ENCODE measurements at regions of chr17 and their contacts with region 1.

Region 1: GRCh38 chr17:76353599-76354316 is at the start of gene PRPSAP1:
- DNase-seq: peak; percentile 96
- ATAC-seq: peak; percentile 93
- H3K4me3 ChIP-seq: peak within 1 kb of the TSS; percentile 53 to 88 (median 68)
- H3K4me3 Mint-ChIP-seq: peak within 1 kb of the TSS; percentile 99
- H3K27ac ChIP-seq: peak within 1 kb of the TSS; percentile 84 to 94
- H3K27ac Mint-ChIP-seq: peak within 1 kb of the TSS; percentile 99
- H3K4me1 ChIP-seq: peaks cover 7 to 16% of the 10 kb centered on the region in 2 donors
- H3K4me1 Mint-ChIP-seq: peaks cover 27% of the 10 kb centered on the region
- H3K27me3 ChIP-seq: no peaks in the 10 kb centered on the region
- H3K27me3 Mint-ChIP-seq: no peaks in the 10 kb centered on the region
- CTCF ChIP-seq: peak; percentile 19
- total RNA-seq, gene PRPSAP1: 45.5 and 48.0 TPM in 2 replicates

Region 2: GRCh38 chr17:76072148-76072858 is 281.5 kb before region 1 on chr17 and contains the start of gene SRP68:
- CTCF ChIA-PET with region 1: no interaction called
- POLR2A ChIA-PET with region 1: no interaction called
- intact Hi-C with region 1: loop called (anchors 2 kb)
- DNase-seq: peak; percentile 87
- ATAC-seq: peak; percentile 93
- H3K4me3 ChIP-seq: peak within 1 kb of the TSS; percentile 80 to 92 (median 89)
- H3K4me3 Mint-ChIP-seq: peak within 1 kb of the TSS; percentile 96
- H3K27ac ChIP-seq: peak within 1 kb of the TSS; percentile 74 to 87
- H3K27ac Mint-ChIP-seq: peak within 1 kb of the TSS; percentile 94
- H3K4me1 ChIP-seq: peaks cover 46 to 53% of the 10 kb centered on the region in 2 donors
- H3K4me1 Mint-ChIP-seq: peaks cover 59% of the 10 kb centered on the region
- H3K27me3 ChIP-seq: peaks cover 0 to 39% (median 26%) of the 10 kb centered on the region in 4 experiments
- H3K27me3 Mint-ChIP-seq: peaks cover 21% of the 10 kb centered on the region
- CTCF ChIP-seq: no peak
- total RNA-seq, gene SRP68: 75.4 and 82.3 TPM in 2 replicates

Region 3: DNA sequence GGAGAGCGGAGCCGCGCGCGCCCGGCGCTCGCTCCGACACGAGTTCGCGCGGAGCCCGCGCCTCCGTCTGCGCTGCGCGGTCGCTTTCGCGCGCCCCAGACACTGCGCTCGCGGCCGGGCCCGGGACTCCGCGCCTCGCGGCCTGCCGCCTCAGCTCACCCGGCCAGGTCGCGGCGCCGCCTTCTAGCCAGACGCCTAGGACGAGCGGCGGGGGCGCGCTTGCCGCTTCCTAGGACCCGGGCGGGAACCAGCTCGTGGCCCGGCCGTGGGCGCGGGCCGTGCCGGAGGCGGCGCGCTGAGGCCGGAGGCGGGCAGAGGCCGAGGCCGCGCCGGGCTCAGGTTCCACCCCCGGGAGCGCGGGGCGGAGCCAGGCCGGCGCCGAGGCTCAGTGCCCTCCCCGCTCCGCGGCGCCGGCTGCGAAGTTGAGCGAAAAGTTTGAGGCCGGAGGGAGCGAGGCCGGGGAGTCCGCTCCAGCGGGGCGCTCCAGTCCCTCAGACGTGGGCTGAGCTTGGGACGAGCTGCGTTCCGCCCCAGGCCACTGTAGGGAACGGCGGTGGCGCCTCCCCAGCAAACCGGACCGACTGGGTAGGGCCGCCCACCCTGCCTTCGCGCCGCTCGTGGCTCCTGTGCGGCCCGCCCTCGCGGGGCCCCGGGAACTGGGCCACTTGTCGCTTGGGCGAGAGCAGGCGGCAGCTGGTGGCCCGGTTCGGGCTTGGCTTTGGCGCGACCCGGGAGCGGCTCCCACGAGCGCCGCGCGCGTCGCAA is 30.6 kb after region 1 on chr17 and contains the start of gene SPHK1:
- CTCF ChIA-PET with region 1: interaction called, 32 read pairs
- POLR2A ChIA-PET with region 1: interaction called, 4 read pairs
- intact Hi-C with region 1: loop called (anchors 1 kb)
- DNase-seq: peak; percentile 81
- ATAC-seq: peak; percentile 76
- H3K4me3 ChIP-seq: peak within 1 kb of the TSS; percentile 40 to 71 (median 58)
- H3K4me3 Mint-ChIP-seq: peak within 1 kb of the TSS; percentile 84
- H3K27ac ChIP-seq: no peak within 1 kb of the TSS
- H3K27ac Mint-ChIP-seq: peak within 1 kb of the TSS; percentile 78
- H3K4me1 ChIP-seq: peaks cover 26 to 29% of the 10 kb centered on the region in 2 donors
- H3K4me1 Mint-ChIP-seq: peaks cover 17% of the 10 kb centered on the region
- H3K27me3 ChIP-seq: peaks cover 0 to 24% (median 8%) of the 10 kb centered on the region in 4 experiments
- H3K27me3 Mint-ChIP-seq: peaks cover 7% of the 10 kb centered on the region
- CTCF ChIP-seq: no peak
- total RNA-seq, gene SPHK1: 2.2 and 2.4 TPM in 2 replicates

Region 4: DNA sequence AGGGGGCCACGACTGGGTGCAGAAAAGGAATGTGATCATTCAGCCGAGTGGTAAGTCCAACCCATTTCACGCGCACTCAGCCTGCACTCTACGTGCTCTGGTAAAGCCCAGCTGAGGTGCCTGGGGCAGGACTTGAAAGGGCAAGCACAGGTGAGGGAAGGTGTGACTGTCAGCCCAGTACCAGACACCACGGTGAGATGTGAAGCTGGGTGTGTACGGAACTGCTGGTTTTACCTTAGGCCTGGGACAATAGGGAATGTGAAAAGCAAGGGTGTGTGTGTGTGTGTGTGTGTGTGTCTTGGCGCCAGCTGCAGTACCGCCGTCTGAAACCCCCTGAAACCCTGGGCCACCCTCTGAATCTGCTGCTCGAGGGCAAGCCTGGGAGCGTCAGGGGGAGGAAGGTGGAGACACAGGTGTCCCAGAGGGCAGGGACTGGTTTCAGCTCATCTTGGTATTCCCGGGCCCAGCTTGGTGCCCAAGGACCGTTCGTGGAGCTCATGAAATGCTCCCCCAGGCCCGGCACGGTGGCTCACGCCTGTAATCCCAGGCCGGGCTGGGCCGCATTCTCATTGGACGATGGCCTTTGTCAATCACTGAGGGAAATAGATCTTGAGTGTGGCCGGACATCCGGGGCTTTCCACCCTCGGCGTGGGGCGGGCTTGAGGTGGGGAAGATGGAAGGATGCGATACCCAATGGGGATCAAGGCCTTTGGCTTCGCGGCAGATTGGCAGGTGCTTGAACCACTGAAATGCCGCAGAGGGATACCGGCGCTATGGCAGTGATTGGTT is 317.6 kb after region 1 on chr17:
- CTCF ChIA-PET with region 1: no interaction called
- POLR2A ChIA-PET with region 1: no interaction called
- intact Hi-C with region 1: loop called (anchors 1 kb)
- DNase-seq: peak; percentile 99
- ATAC-seq: peak; percentile 99
- H3K4me3 ChIP-seq: peak overlapping the region; percentile 66 to 92 (median 84)
- H3K4me3 Mint-ChIP-seq: peak overlapping the region; percentile 92
- H3K27ac ChIP-seq: peak overlapping the region; percentile 80 to 81
- H3K27ac Mint-ChIP-seq: peak overlapping the region; percentile 93
- H3K4me1 ChIP-seq: peaks cover 10 to 18% of the 10 kb centered on the region in 2 donors
- H3K4me1 Mint-ChIP-seq: peaks cover 25% of the 10 kb centered on the region
- H3K27me3 ChIP-seq: peaks cover 0 to 3% (median 1%) of the 10 kb centered on the region in 4 experiments
- H3K27me3 Mint-ChIP-seq: peaks cover 13% of the 10 kb centered on the region
- CTCF ChIP-seq: no peak

Region 5: GRCh38 chr17:76681222-76682137 is 327.7 kb after region 1 on chr17:
- CTCF ChIA-PET with region 1: no interaction called
- POLR2A ChIA-PET with region 1: no interaction called
- intact Hi-C with region 1: no loop called
- DNase-seq: peak; percentile 57
- ATAC-seq: peak; percentile 53
- H3K4me3 ChIP-seq: no peak overlapping the region
- H3K4me3 Mint-ChIP-seq: no peak overlapping the region
- H3K27ac ChIP-seq: no peak overlapping the region
- H3K27ac Mint-ChIP-seq: no peak overlapping the region
- H3K4me1 ChIP-seq: no peaks in the 10 kb centered on the region
- H3K4me1 Mint-ChIP-seq: no peaks in the 10 kb centered on the region
- H3K27me3 ChIP-seq: peaks cover 0 to 8% (median 0%) of the 10 kb centered on the region in 4 experiments
- H3K27me3 Mint-ChIP-seq: no peaks in the 10 kb centered on the region
- CTCF ChIP-seq: peak; percentile 65

Measured in B cell (primary cell).